ENCODE measurements at regions of chr12 and their contacts with region 1.

Region 1: GRCh38 chr12:7678738-7679137 is 13.0 kb upstream of the APOBEC1 start:
- DNase-seq: no peak
- H3K4me3 Mint-ChIP-seq: no peak overlapping the region
- H3K27ac Mint-ChIP-seq: no peak overlapping the region
- H3K4me1 Mint-ChIP-seq: peaks cover 1% of the 10 kb centered on the region
- H3K27me3 Mint-ChIP-seq: peaks cover 6% of the 10 kb centered on the region

Region 2: DNA sequence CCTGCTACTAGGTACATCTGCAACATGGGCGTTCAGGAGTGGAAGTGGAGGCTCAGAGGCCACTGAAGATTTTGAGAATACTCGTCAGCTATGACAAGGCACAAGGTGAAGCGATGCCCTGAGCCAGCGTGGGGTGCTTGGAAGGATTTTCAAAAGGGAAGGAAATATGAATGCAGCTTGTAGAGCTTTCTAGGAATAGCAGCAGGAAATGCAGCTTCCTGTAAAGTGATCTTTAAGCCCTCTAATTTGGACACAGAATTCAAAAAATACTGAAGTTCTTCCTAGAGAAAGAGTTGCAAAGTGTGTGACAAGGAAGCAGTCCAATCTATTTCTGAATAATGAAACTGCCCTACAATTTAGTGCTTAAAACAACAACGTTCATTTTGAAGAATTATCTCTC is 631.4 kb before region 1 on chr12:
- CTCF ChIA-PET with region 1: no interaction called
- POLR2A ChIA-PET with region 1: no interaction called
- DNase-seq: no peak
- H3K4me3 Mint-ChIP-seq: peak overlapping the region; percentile 6
- H3K27ac Mint-ChIP-seq: peak overlapping the region; percentile 64
- H3K4me1 Mint-ChIP-seq: peaks cover 27% of the 10 kb centered on the region
- H3K27me3 Mint-ChIP-seq: peaks cover 15% of the 10 kb centered on the region

Region 3: DNA sequence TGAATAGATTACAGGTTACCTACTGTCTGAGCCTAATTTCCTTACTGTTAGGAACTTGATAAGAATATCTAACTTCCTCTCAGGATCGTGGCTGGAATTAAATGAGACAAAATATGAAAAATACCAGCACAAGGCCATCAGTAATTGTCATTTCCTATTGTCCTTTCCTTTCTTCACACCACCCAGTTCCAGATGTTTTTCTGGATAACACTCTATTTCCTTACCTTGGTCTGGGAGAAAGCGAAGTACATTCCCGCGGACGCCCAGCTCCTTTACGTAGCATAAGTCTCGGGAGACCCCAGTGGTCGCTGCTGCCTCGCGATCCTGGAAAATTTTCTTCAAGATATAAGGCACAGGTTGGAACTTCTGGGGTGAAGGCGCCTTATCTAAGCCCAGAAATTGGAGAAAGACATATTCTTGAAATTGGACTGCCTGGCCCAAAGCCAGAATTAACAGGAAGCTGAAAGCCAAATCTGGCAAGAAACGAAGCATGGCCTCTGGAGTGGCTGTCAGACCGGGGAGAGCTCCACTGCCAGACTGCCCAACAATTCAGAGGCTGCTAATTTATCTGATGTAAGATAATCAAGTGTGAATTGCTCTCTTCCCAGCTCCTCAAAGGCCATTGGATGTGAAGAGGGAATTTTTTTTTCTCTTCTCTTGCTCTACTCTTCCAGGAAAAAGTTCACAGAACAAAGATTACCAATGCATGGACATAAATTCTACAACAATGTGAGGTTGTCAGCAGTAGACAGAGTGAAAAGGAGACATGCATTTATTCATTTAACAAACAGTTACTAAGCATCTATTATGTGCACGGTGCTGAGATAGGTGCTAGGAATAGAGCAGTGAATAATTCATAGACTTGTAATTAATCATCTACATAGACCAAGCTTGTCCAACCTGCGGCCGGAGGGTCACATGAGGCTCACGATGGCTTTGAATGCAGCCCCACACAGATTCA is 16.8 kb after region 1 on chr12 and contains the start of gene GDF3:
- CTCF ChIA-PET with region 1: no interaction called
- POLR2A ChIA-PET with region 1: no interaction called
- DNase-seq: no peak
- H3K4me3 Mint-ChIP-seq: no peak within 1 kb of the TSS
- H3K27ac Mint-ChIP-seq: no peak within 1 kb of the TSS
- H3K4me1 Mint-ChIP-seq: no peaks in the 10 kb centered on the region
- H3K27me3 Mint-ChIP-seq: peaks cover 5% of the 10 kb centered on the region
- total RNA-seq, gene GDF3: not detected

Region 4: DNA sequence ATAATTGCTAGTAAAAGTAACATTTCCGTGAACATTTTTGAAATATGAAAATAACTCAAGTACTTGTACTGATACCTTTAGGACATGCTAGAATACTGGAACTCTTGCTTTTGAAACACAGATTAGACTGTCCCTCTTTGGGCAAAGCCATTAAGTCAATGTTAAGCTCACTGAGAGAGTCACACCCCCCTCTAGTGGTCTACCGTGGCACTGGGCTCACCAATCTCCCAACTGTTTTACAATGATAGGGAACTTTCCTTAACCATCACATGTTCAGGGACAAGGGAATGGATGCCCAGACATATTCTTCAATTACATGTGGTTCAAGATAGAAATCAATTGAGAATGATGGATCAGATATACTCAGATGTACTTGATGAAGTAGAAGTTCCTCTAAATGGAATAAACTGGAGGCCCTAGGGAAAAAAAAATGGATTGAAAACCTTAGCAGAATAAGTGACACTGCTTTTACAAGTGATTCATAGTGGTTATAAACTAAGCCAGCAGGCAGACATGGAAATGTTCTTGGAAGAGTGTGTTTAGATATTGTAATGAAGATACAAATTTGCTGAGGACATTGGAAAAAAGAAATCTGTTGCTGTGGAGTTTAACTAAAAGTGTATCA is 128.2 kb after region 1 on chr12:
- CTCF ChIA-PET with region 1: interaction called, 15 read pairs
- POLR2A ChIA-PET with region 1: no interaction called
- DNase-seq: peak; percentile 61
- H3K4me3 Mint-ChIP-seq: no peak overlapping the region
- H3K27ac Mint-ChIP-seq: no peak overlapping the region
- H3K4me1 Mint-ChIP-seq: no peaks in the 10 kb centered on the region
- H3K27me3 Mint-ChIP-seq: peaks cover 4% of the 10 kb centered on the region

Measured in activated CD4-positive, alpha-beta memory T cell treated with anti-CD3 and anti-CD28 coated beads, Interleukin-2, amount 10 ng/mL, durations not matched to agents 7 days and 5 days (primary cell).